Left lung (tissue), 14 donors: ENCODE measurements at regions of chr14 and their contacts with region 1.

Region 1: GRCh38 chr14:91418387-91419043 is 895 bp upstream of the CCDC88C start:
- DNase-seq: peak; percentile 52 to 94 (median 68)
- ATAC-seq: peak; percentile 81
- H3K4me3 ChIP-seq: peak overlapping the region; percentile 29 to 91
- H3K27ac ChIP-seq: peak overlapping the region in 1 of 2 donors; percentile 85
- H3K4me1 ChIP-seq: peaks cover 9 to 57% of the 10 kb centered on the region in 2 donors
- H3K27me3 ChIP-seq: peaks cover 0 to 6% of the 10 kb centered on the region in 2 donors
- CTCF ChIP-seq: peak; percentile 96 to 98

Region 2: DNA sequence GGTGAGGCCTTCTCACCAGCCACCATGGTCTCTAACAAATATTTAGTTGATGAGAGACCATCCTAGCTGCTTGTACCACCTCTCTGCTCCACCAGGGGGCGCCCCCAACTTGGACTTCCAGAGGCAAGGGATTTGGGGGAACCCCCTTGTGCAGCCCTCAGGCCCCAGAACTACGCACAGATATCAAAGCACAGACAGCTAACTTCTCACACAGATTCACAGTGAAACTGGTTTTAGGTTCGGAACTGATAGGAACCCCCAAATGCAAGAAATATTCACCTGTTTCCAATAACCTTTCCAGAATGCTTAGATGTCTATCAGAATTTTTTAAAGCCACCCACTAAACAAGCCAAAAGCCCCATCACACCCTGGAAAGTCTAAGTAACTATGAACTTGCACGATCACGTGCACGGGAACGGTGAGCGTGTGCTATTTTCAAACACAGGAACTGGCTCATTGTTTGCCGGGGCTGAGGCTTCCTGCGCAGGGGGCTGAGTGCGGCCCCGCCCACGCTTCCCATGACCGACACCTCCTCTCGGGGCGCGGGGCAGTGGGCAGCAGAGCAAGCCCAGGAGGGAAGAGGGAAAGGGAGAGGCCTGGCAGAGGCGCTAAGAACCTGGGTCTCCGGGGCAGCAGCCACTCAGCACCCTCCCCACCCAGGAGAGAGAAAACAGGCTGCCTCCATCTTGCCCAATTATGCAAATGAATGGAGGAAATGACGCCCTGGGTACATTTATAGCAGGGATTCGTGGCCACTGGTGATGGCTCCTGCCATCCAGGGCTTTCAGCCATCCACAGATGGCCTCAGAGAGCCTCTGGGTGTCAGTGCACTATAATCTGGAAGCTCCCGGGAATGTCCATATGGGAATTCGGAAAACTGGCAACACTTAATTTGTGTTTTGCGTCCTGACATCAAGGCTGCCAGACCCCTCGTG is 94.6 kb before region 1 on chr14:
- intact Hi-C with region 1: loop called (anchors 5 to 10 kb)
- DNase-seq: peak; percentile 73 to 97 (median 86)
- ATAC-seq: peak; percentile 91
- H3K4me3 ChIP-seq: peak overlapping the region in 1 of 2 donors; percentile 47
- H3K27ac ChIP-seq: peak overlapping the region; percentile 58 to 87
- H3K4me1 ChIP-seq: peaks cover 24 to 46% of the 10 kb centered on the region in 2 donors
- H3K27me3 ChIP-seq: no peaks in the 10 kb centered on the region
- CTCF ChIP-seq: peak; percentile 93 to 96

Region 3: DNA sequence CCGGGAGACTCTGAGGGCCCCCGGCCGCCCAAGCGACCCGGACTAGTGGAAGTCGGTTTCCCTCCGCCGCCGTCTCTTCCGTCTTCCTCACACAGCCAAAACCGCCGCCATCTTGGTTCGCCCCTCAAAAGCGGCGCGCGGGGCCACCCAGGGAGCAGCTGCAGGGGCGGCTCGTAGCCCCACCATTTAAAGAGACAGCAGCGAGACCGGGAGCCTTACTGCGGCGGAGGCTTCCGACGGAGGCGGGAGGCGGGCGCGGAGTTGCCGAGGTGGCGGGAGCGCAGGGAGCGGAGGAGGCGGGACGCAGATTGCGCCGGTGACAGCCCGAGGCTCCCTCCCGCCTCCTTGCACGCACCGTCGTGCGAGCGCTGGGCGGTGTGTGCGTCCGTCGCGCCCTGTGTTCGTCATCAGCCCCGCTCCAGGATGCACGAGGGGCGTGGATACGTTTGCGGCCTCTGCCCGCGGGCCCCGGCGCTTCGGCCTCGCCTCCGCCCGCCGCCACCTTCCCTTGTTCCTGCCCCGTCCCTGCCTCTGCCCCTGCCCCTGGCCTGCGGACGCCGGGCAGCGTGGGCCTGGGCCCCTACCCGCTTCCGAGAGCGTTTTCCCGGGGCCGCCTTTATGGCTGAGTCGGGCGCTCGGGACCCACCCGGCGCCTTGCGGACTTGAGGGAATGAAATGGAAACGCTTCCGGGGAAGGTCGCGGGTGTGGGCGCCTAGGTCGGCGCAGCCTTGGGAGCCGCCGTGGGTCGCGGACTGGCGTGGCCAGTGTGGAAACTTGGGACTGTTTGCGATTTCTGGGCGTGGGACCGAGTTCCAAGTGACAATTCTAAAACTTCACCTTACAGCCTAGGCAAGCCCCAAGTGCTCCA is 91.9 kb after region 1 on chr14 and contains the start of gene PPP4R3A:
- intact Hi-C with region 1: no loop called
- DNase-seq: peak; percentile 96 to 98 (median 97)
- ATAC-seq: peak; percentile 95
- H3K4me3 ChIP-seq: peak within 1 kb of the TSS; percentile 74 to 94
- H3K27ac ChIP-seq: peak within 1 kb of the TSS; percentile 98 to 99
- H3K4me1 ChIP-seq: peaks cover 0 to 32% of the 10 kb centered on the region in 2 donors
- H3K27me3 ChIP-seq: no peaks in the 10 kb centered on the region
- CTCF ChIP-seq: no peak
- polyA plus RNA-seq, gene PPP4R3A: 108 to 125 (median 114) TPM

Region 4: GRCh38 chr14:91693346-91693745 is 274.8 kb after region 1 on chr14:
- intact Hi-C with region 1: no loop called
- DNase-seq: no peak
- ATAC-seq: peak; percentile 88
- H3K4me3 ChIP-seq: no peak overlapping the region
- H3K27ac ChIP-seq: no peak overlapping the region
- H3K4me1 ChIP-seq: no peaks in the 10 kb centered on the region
- H3K27me3 ChIP-seq: no peaks in the 10 kb centered on the region
- CTCF ChIP-seq: no peak

Region 5: DNA sequence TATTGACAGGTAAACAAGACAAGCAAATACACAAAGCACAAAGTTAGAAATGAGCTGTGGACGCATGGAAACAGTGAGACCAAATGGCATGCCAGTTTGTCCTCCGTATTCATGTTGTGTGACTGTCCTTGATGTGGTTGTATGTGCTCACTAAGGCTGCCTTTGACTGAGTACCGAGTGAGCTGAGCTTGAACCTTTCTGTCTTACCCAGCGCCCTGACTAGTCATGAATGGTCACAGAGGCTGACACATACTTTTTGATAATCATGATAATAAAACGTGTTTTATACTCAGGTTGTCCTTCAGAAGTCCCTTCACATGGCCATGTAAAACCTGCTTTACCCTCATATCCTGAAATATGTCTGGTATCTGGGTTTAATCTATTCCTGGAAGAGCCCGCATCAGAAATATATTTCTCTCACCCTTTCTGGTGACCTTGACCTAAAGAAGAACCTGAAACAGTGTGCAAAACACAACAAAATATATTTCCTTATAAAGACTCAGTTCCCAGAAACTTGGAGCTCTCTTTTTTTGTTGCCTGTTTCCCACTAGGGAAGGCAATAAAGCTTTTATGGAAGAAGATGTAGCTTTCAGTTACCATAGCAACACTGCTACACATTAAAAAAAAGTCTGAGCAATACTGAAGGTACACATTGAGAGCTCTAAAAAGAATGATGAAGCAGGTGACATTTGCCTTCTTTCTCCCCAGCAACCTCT is 314.1 kb after region 1 on chr14:
- intact Hi-C with region 1: no loop called
- DNase-seq: no peak
- ATAC-seq: no peak
- H3K4me3 ChIP-seq: no peak overlapping the region
- H3K27ac ChIP-seq: no peak overlapping the region
- H3K4me1 ChIP-seq: no peaks in the 10 kb centered on the region
- H3K27me3 ChIP-seq: no peaks in the 10 kb centered on the region
- CTCF ChIP-seq: no peak